ENCODE measurements at regions of chr11 and their contacts with region 1.

Region 1: GRCh38 chr11:104120493-104121137 is 43.3 kb downstream of the PDGFD start:
- DNase-seq: no peak
- ATAC-seq: no peak
- H3K4me3 ChIP-seq: no peak overlapping the region
- H3K4me1 ChIP-seq: no peaks in the 10 kb centered on the region
- CTCF ChIP-seq: no peak

Region 2: DNA sequence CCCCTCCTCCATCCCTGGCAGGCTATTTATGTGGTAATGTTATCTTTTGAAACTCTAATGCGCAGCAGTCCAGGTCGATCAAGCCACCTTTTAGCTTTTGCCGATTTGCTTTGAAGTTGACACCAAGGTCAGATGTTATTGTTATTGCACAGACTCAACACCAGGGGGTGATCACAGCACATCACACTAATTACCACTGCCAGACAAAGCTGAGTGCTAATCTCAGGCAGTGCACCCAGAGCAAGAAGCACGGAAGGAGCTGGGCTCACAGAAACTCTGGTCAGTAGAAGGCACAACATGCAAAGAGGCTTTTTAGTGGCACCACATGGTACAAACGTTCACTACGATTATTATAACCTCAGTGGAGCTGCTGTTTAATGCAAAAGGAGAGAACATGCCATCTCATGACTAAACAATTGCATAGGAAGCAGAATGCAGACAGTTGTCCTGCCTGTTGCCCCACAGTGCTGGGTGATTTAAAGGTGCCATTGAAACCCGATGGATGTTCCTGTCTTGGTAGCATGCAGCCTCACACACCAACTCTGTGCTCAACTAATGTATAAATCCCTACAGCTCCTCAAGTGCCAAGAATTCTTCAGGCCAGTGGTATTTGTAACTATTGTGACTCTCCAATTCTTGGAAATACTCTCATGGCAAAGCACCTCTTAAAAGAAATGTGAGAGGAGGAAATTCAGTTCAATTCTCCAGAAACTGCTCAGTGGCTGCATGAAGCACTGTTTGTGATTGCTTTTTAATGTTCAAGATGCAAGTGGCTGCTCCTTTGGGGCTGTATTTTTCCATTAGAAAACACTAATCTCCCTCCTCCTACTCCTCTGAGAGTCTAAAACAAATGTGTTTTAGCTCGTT is 438.1 kb before region 1 on chr11:
- intact Hi-C with region 1: loop called in 1 of 2 experiments (anchors 10 kb)
- DNase-seq: peak in 2 of 3 donors; percentile 39 to 60
- ATAC-seq: peak; percentile 98
- H3K4me3 ChIP-seq: no peak overlapping the region
- H3K4me1 ChIP-seq: peaks cover 4% of the 10 kb centered on the region
- CTCF ChIP-seq: peak; percentile 55

Region 3: GRCh38 chr11:103936059-103936458 is 184.6 kb before region 1 on chr11:
- intact Hi-C with region 1: no loop called
- DNase-seq: no peak
- ATAC-seq: no peak
- H3K4me3 ChIP-seq: no peak overlapping the region
- H3K4me1 ChIP-seq: no peaks in the 10 kb centered on the region
- CTCF ChIP-seq: no peak

Region 4: GRCh38 chr11:104090767-104091166 is 29.8 kb before region 1 on chr11:
- intact Hi-C with region 1: no loop called
- DNase-seq: no peak
- ATAC-seq: no peak
- H3K4me3 ChIP-seq: no peak overlapping the region
- H3K4me1 ChIP-seq: no peaks in the 10 kb centered on the region
- CTCF ChIP-seq: no peak